MCF 10A (cell line): ENCODE measurements at regions of chr2 and their contacts with region 1.

Region 1: GRCh38 chr2:237171396-237171795 is 85.7 kb downstream of the COPS8 start:
- DNase-seq: peak; percentile 88
- H3K4me3 Mint-ChIP-seq: no peak overlapping the region
- H3K27ac Mint-ChIP-seq: peak overlapping the region; percentile 84
- H3K4me1 Mint-ChIP-seq: peaks cover 14% of the 10 kb centered on the region
- H3K27me3 Mint-ChIP-seq: no peaks in the 10 kb centered on the region
- CTCF ChIP-seq: peak; percentile 38

Region 2: DNA sequence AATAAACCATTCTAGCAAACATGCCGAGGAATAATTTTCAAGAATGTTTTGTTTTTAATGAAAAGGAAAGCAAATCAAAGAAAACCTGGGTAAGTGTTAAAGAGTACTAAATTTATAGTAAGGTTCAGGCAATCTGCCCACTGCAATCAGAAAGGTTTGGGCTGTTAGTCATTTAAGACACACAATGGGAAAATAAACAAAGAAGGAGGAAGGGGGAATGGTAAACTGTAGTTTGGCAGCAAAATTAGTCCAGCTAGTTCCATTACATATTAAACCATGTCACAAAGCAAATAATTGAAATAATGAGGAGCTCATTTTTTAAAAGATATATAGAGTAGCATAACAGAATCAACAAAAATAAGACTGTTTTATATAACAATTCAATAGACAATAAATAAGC is 173.2 kb before region 1 on chr2:
- CTCF ChIA-PET with region 1: no interaction called
- POLR2A ChIA-PET with region 1: no interaction called
- intact Hi-C with region 1: no loop called
- DNase-seq: peak; percentile 13
- H3K4me3 Mint-ChIP-seq: no peak overlapping the region
- H3K27ac Mint-ChIP-seq: no peak overlapping the region
- H3K4me1 Mint-ChIP-seq: peaks cover 6% of the 10 kb centered on the region
- H3K27me3 Mint-ChIP-seq: peaks cover 49% of the 10 kb centered on the region
- CTCF ChIP-seq: no peak

Region 3: DNA sequence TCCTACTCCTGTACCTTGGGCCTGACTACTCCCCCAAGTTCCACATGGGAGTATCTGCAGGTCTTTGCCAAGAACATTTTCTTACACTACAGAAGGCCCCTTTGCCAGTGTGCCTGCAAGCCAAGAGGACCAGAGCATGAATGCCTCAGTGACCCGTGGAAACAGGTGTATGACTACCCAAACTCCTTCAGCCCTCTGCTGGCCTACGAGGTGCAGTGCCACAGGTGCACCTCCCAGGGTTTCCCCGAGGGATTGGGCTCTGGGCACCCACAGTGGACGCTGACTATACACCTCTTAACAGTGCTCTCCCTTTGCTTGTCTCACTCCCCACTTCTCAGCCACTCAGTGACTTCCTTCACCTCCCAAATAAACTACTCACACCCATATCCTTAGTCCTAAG is 151.2 kb after region 1 on chr2:
- CTCF ChIA-PET with region 1: interaction called, 3 read pairs
- POLR2A ChIA-PET with region 1: no interaction called
- intact Hi-C with region 1: loop called (anchors 1 kb)
- DNase-seq: peak; percentile 66
- H3K4me3 Mint-ChIP-seq: no peak overlapping the region
- H3K27ac Mint-ChIP-seq: no peak overlapping the region
- H3K4me1 Mint-ChIP-seq: peaks cover 16% of the 10 kb centered on the region
- H3K27me3 Mint-ChIP-seq: no peaks in the 10 kb centered on the region
- CTCF ChIP-seq: peak; percentile 40